Mammary epithelial cell (primary cell): ENCODE measurements at regions of chr1 and their contacts with region 1.

Region 1: DNA sequence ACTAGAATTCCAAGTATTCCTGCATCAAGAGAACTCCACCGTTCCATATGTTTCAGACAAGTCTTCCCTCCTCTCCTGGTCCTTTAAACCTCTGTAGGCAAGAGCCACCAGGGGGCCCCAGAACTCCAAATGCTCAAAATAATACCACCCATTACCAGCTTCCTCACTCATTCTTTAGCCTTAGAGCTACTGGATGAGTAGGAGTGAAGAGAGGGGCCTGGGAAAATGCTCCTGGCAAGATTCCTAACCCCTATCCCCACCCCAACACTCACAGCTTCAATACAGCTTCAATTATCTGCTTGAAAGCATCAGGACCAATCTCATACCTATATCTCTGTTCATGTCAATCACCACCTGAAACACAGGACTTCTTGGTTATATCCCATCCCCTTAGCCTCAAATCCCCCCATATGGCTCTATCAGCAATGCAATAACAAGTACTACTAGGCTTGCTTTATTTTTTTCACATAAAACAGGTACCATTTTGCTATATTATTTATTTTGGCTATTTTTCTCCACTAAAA is 9.7 kb downstream of the TOR1AIP2 start:
- DNase-seq: peak; percentile 25
- H3K4me3 ChIP-seq: no peak overlapping the region
- H3K27ac ChIP-seq: no peak overlapping the region
- H3K4me1 ChIP-seq: no peaks in the 10 kb centered on the region
- H3K27me3 ChIP-seq: no peaks in the 10 kb centered on the region
- CTCF ChIP-seq: peak; percentile 68 to 69

Region 2: GRCh38 chr1:179809506-179810366 is 58.1 kb before region 1 on chr1:
- CTCF ChIA-PET with region 1: no interaction called
- dilution Hi-C with region 1: no loop called
- in situ Hi-C with region 1: no loop called
- intact Hi-C with region 1: no loop called
- DNase-seq: peak; percentile 54
- H3K4me3 ChIP-seq: no peak overlapping the region
- H3K27ac ChIP-seq: no peak overlapping the region
- H3K4me1 ChIP-seq: peaks cover 13% of the 10 kb centered on the region
- H3K27me3 ChIP-seq: no peaks in the 10 kb centered on the region
- CTCF ChIP-seq: peak; percentile 88 to 95

Region 3: DNA sequence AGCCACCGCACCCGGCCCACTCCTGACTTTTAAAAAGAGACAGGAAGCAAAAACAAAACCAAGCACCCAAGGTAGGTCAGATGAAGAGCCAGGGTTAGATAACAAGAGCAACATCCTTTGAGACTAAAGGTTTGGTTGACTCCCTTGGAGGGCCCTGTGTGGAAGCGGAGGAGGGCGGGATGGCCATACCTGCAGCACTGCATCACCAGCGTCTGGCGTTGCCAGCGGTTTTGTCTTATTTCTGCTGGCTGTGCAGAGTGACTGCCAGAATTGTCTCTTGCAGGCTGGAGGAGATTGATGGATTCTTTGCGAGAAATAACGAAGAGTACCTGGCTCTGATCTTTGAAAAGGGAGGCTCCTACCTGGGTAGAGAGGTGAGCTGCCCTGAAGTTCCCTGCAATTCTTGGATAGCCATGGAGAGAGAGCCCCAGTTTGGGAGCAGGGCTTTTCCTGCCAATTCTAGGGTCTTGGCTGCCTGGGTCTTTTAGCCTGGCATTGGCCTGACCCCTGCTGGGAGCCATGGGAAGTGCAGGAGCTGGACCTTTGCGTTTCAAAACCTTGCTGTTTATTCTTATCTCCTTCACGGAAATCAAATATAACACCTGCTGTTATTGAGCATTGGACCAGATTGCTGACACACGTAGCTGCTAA is 310.8 kb after region 1 on chr1:
- CTCF ChIA-PET with region 1: no interaction called
- dilution Hi-C with region 1: no loop called
- in situ Hi-C with region 1: loop called in 1 of 2 experiments (anchors 10 kb)
- intact Hi-C with region 1: loop called (anchors 1 kb)
- DNase-seq: no peak
- H3K4me3 ChIP-seq: no peak overlapping the region
- H3K27ac ChIP-seq: no peak overlapping the region
- H3K4me1 ChIP-seq: no peaks in the 10 kb centered on the region
- H3K27me3 ChIP-seq: no peaks in the 10 kb centered on the region
- CTCF ChIP-seq: peak; percentile 98